ENCODE measurements at regions of chr1 and their contacts with region 1.

Region 1: GRCh38 chr1:108125312-108126138 is 74.6 kb downstream of the SLC25A24 start:
- DNase-seq: peak; percentile 38 to 71
- H3K4me3 ChIP-seq: no peak overlapping the region
- H3K4me1 ChIP-seq: no peaks in the 10 kb centered on the region
- H3K27me3 ChIP-seq: no peaks in the 10 kb centered on the region

Region 2: GRCh38 chr1:107782217-107782845 is 343.2 kb before region 1 on chr1:
- in situ Hi-C with region 1: loop called (anchors 10 kb)
- DNase-seq: peak; percentile 41 to 59
- H3K4me3 ChIP-seq: no peak overlapping the region
- H3K4me1 ChIP-seq: no peaks in the 10 kb centered on the region
- H3K27me3 ChIP-seq: 0 out of 2 replicates have a peak, but pooled peaks cover 3% of the 10 kb centered on the region

Measured in HAP-1 (cell line).